GM12878 (cell line): ENCODE measurements at regions of chr4 and their contacts with region 1.

Region 1: DNA sequence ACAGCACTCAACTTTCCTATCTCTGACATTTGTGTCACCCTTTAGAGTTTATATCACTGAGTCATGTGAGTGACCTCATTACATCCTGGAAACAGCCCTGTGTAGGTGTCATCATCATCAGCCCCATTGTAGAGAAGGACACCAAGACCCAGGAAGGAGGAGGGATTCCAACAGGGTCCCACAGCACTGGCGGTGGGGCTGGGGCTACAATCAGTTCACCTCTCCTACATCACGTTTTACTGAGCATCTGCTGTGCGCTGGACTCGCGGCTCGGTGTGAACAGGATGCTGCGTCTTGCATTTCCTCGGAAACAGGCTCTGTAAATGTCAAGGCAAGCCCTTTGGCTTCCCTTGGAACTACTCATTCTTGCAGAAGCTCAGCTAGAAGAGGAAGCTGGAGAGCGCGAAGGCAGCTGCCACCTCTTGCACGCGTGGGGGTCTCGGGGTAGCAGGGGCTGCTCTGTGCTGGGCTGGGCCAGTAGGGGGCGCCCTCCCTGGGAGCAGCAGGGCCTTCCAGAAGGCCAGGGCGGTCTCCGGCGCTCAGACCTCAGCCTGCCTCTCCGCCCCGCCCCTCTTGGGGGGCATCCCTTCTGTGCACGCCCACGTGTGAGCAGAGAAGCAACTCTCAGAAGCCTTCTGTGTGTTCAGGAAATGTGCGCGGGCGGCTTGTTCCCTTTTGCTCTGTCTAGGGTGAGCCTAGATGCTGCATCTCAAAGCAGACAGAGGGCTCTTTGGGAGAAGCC is 29.0 kb downstream of the REELD1 start:
- DNase-seq: peak; percentile 45
- ATAC-seq: peak; percentile 85
- H3K4me3 ChIP-seq: no peak overlapping the region
- H3K27ac ChIP-seq: no peak overlapping the region
- H3K4me1 ChIP-seq: peaks cover 24% of the 10 kb centered on the region
- H3K27me3 ChIP-seq: no peaks in the 10 kb centered on the region
- CTCF ChIP-seq: peak; percentile 58 to 77 (median 73)
- EP300 ChIP-seq: no peak; a peak in 1 of 4 replicates
- POLR2A ChIP-seq: no peak
- RAD21 ChIP-seq: peak; percentile 27; the same call in 1 of the 2 replicates

Region 2: GRCh38 chr4:146018247-146018646 is 225.1 kb before region 1 on chr4:
- CTCF ChIA-PET with region 1: no interaction called
- POLR2A ChIA-PET with region 1: no interaction called
- RAD21 ChIA-PET with region 1: no interaction called
- SMC1A ChIA-PET with region 1: no interaction called
- in situ Hi-C with region 1: no loop called
- intact Hi-C with region 1: no loop called
- DNase-seq: no peak
- ATAC-seq: no peak
- H3K4me3 ChIP-seq: no peak overlapping the region
- H3K27ac ChIP-seq: no peak overlapping the region
- H3K4me1 ChIP-seq: peaks cover 3% of the 10 kb centered on the region
- H3K27me3 ChIP-seq: no peaks in the 10 kb centered on the region
- CTCF ChIP-seq: no peak
- EP300 ChIP-seq: no peak
- POLR2A ChIP-seq: no peak
- RAD21 ChIP-seq: no peak

Region 3: GRCh38 chr4:146260521-146260920 is 17.2 kb after region 1 on chr4:
- CTCF ChIA-PET with region 1: interaction called, 5 read pairs
- POLR2A ChIA-PET with region 1: interaction called, 4 read pairs
- RAD21 ChIA-PET with region 1: interaction called, 4 read pairs
- SMC1A ChIA-PET with region 1: interaction called, 15 read pairs
- in situ Hi-C with region 1: no loop called
- intact Hi-C with region 1: no loop called
- DNase-seq: no peak
- ATAC-seq: no peak
- H3K4me3 ChIP-seq: no peak overlapping the region
- H3K27ac ChIP-seq: no peak overlapping the region
- H3K4me1 ChIP-seq: no peaks in the 10 kb centered on the region
- H3K27me3 ChIP-seq: no peaks in the 10 kb centered on the region
- CTCF ChIP-seq: no peak
- EP300 ChIP-seq: no peak
- POLR2A ChIP-seq: no peak
- RAD21 ChIP-seq: no peak

Region 4: DNA sequence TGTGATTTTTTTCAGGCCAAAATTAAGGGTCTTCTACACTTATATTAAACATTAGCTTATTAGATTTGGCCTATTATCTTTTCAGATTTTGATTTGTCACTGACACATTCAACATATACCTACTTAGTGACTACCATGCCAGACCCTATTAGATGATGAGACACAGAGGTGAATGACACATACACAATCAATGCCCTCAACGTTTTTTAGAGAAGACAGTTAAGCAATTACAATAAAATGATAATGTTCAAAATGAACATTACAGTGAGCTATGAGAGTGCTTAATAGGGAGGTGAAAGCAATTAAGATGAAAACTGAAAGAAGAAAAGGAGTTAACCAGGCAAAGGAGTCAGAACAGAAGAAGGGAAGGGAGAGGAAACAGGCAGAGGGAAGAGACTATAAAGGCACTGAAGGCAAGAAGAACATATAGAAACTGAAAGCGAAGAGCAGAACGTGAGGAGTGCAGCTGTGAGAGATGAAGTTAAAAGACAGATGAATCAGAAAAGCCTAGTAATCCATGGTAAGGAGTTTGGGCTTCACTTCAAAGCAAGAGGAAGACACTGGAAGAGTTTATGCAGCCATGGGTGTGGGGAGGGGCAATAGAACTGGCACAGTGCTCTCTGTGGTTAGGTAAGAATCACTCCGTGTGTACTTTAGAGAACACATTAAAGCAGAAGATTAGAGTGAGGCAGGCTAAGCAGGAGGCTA is 90.0 kb after region 1 on chr4:
- CTCF ChIA-PET with region 1: interaction called, 18 read pairs
- POLR2A ChIA-PET with region 1: interaction called, 9 read pairs
- RAD21 ChIA-PET with region 1: no interaction called
- SMC1A ChIA-PET with region 1: interaction called, 13 read pairs
- in situ Hi-C with region 1: loop called (anchors 5 kb)
- intact Hi-C with region 1: loop called (anchors 1 kb)
- DNase-seq: peak; percentile 59
- ATAC-seq: peak; percentile 88
- H3K4me3 ChIP-seq: peak overlapping the region; percentile 54
- H3K27ac ChIP-seq: peak overlapping the region; percentile 38
- H3K4me1 ChIP-seq: peaks cover 13% of the 10 kb centered on the region; the same call in 1 of the 2 replicates
- H3K27me3 ChIP-seq: no peaks in the 10 kb centered on the region
- CTCF ChIP-seq: no peak
- EP300 ChIP-seq: no peak
- POLR2A ChIP-seq: no peak
- RAD21 ChIP-seq: no peak